ENCODE measurements at regions of chr9 and their contacts with region 1.

Region 1: DNA sequence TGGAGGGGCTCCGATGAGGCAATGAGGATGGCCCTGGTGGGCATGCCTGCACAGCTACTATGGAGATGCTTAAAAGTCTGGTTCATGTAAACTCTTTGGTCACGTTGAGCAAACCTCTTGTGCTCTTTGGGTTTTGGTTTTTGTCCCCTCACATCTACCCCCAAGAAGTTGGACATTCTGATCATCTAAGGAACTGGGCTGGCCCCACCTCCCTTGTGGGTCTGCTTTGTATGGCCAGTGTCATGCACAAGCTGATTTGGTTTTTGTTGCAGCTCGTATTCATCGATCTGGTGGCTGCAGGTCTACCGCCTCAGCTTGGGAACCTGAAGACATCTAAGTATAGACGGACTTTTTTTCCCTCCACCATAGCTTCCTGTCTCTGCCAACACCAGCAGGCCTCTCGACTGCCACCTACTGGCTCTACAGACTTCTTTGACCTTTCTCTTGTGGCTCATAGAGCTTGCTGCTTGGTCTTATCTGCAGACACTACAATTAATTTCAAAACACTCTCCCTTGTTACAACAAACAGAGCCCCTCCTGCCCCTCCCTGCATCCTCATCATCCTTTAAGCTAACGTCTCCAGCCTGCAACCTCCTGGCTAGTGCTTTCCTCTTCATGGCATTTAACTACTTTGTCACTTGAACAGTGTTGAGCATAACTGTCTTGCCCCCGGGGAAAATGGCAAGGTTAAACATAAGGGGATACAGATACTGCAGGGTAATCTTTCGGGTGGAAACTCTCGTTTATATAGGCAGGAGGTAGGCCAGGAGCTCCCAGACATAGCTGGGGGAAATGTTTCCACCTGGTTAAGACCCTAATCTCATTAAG is 34.5 kb downstream of the TSTD2 start:
- DNase-seq: peak; percentile 60
- H3K4me3 ChIP-seq: no peak overlapping the region
- H3K27ac ChIP-seq: no peak overlapping the region
- H3K27me3 ChIP-seq: peaks cover 6% of the 10 kb centered on the region
- CTCF ChIP-seq: peak; percentile 95

Region 2: DNA sequence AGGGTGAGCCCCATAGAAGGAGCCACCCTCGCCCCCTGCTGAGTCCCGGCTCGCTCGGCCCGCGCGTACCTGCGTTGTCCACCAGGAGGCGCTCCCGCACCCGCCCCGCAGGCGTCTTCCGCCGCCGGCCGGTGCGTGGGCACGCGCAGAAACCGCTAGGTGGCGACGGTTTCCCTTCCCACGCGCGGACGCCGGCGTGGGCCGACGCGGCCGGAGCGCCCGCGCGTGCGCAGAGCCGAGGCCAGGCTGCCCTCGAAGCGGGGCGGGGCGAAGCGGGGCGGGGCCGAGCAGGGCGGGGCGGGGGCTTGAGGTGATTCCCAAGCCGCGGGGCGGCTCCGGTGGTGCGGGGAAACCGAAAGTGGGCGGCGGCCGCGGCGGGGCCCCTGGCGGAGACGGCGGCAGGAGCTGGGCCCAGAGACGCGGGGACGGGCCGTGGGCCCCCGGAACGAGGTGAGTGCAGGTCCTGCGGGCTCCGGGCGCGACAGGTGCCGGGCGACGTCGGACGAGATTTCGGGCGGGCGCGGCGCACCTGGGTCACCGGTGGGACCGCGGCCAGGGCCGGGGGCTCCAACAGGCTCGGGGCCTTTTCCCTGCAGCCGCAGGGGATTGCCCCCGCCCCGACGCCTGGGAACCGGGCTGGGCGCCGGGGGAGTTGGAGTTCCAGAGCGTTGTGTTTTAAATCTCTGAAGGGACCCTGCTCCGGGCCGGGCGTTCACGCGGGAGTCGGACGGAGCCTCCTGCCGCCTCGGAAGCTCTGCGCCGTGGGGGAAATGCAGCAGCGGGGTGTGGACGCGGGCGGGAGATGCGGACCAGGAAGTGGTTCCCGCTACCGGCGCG is 186.7 kb before region 1 on chr9 and contains the start of gene TDRD7:
- CTCF ChIA-PET with region 1: interaction called, 45 read pairs
- POLR2A ChIA-PET with region 1: interaction called, 4 read pairs
- DNase-seq: peak; percentile 42
- H3K4me3 ChIP-seq: peak within 1 kb of the TSS; percentile 72
- H3K27ac ChIP-seq: no peak within 1 kb of the TSS
- H3K27me3 ChIP-seq: peaks cover 10% of the 10 kb centered on the region
- CTCF ChIP-seq: peak; percentile 96
- polyA plus RNA-seq, gene TDRD7: 7.3 and 8.2 TPM in 2 replicates

Region 3: DNA sequence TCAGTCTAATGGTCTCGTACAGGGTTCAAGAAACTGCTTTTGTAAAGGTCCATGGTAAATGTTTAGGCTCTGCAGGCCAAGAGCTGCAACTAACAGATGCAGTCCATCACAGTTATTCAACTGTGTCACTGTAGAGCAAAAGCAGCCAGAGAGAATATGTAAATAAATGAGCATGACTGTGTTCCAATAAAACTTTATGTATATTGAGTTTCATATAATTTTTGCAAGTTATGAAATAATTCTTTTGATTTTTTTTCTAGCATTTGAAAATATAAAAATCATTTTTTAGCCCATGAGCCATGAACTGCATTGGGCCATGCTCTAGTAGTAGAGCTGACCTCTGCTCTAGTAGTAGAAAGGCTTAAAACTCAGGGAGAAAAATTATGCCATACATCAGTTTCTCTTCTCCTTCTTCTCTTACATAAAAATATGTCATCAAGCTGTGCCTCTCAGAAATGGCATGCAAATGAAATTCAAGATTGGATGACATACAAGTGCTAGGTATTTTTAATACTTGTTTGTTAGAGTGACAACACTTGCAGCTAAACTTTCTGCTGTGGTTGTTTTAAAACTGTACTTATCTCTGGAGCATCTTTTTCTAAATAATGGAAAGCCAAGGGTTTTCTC is 139.5 kb before region 1 on chr9:
- CTCF ChIA-PET with region 1: interaction called, 704 read pairs
- POLR2A ChIA-PET with region 1: no interaction called
- DNase-seq: no peak
- H3K4me3 ChIP-seq: no peak overlapping the region
- H3K27ac ChIP-seq: no peak overlapping the region
- H3K27me3 ChIP-seq: no peaks in the 10 kb centered on the region
- CTCF ChIP-seq: no peak

Region 4: DNA sequence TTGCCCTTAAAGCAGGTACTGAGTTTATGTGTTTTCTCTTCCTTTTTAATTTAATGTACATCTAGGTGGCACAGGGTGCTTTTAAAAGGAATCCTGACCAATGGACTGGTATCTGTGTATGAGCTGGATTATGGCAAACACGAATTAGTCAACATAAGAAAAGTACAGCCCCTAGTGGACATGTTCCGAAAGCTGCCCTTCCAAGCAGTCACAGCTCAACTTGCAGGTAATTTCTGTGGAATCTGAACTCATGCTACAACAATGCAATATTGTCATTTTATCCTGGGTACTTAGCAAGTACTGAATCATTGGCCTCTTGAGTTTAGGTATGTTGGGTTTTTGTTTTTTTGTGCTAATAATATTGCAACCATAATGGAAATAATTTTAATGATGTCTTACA is 111.6 kb before region 1 on chr9:
- CTCF ChIA-PET with region 1: interaction called, 29 read pairs
- POLR2A ChIA-PET with region 1: no interaction called
- DNase-seq: no peak
- H3K4me3 ChIP-seq: no peak overlapping the region
- H3K27ac ChIP-seq: no peak overlapping the region
- H3K27me3 ChIP-seq: no peaks in the 10 kb centered on the region
- CTCF ChIP-seq: peak; percentile 52

Region 5: GRCh38 chr9:97548819-97549540 is 49.7 kb before region 1 on chr9:
- CTCF ChIA-PET with region 1: interaction called, 11 read pairs
- POLR2A ChIA-PET with region 1: no interaction called
- DNase-seq: no peak
- H3K4me3 ChIP-seq: no peak overlapping the region
- H3K27ac ChIP-seq: no peak overlapping the region
- H3K27me3 ChIP-seq: peaks cover 9% of the 10 kb centered on the region
- CTCF ChIP-seq: no peak

Region 6: DNA sequence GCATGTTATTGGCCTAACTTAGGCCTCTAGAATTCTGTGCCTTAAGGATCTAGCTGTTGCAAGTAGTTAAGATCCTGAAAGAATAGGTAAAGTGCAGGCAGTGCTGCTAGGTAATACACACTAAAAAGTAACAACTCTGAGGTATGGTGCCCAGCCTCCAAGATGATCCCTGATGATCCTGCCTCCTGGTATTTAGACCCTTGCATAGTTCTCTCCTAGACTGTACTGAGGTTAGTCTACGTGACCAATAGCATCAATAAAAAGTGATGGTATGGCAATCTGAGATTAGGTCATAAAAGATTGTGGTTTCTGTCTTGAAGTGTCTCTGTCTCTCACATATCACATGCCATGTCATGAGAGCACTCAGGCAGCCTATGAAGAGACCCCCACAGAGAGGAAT is 25.3 kb after region 1 on chr9:
- CTCF ChIA-PET with region 1: interaction called, 26 read pairs
- POLR2A ChIA-PET with region 1: no interaction called
- DNase-seq: no peak
- H3K4me3 ChIP-seq: no peak overlapping the region
- H3K27ac ChIP-seq: no peak overlapping the region
- H3K27me3 ChIP-seq: no peaks in the 10 kb centered on the region
- CTCF ChIP-seq: no peak

Measured in AG04450 (cell line).